ENCODE measurements at regions of chrX and their contacts with region 1.

Region 1: GRCh38 chrX:55057675-55058249 is 17.1 kb upstream of the PAGE2B start:
- DNase-seq: peak; percentile 37
- H3K4me3 ChIP-seq: no peak overlapping the region
- H3K27ac ChIP-seq: no peak overlapping the region
- H3K4me1 ChIP-seq: no peaks in the 10 kb centered on the region
- H3K27me3 ChIP-seq: no peaks in the 10 kb centered on the region
- CTCF ChIP-seq: peak; percentile 83

Region 2: DNA sequence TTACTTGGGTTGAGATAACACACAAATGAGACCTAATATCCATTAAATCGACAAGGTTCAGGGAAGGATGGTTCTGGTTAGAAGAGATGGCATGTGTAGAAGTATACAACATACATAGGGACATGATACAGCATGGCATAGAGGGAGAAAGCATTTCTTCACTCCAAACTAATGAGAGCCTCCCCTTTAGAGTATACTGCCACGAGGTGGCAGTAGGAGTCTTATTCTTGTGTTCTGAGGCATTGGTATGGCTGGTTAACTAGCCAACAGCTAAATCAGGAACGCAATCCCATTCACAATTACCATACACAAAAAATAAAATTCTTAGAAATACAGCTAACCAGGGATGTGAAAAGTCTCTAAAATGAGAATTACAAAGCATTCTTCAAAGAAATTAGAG is 166.2 kb before region 1 on chrX:
- CTCF ChIA-PET with region 1: no interaction called
- POLR2A ChIA-PET with region 1: no interaction called
- intact Hi-C with region 1: loop called (anchors 5 kb)
- DNase-seq: peak; percentile 47
- H3K4me3 ChIP-seq: no peak overlapping the region
- H3K27ac ChIP-seq: no peak overlapping the region
- H3K4me1 ChIP-seq: no peaks in the 10 kb centered on the region
- H3K27me3 ChIP-seq: peaks cover 4% of the 10 kb centered on the region
- CTCF ChIP-seq: peak; percentile 56